Activated naive CD4-positive, alpha-beta T cell treated with anti-CD3 and anti-CD28 coated beads for 36 hours (primary cell): ENCODE measurements at regions of chr22 and their contacts with region 1.

Region 1: GRCh38 chr22:30742291-30743256 is 47.9 kb downstream of the OSBP2 start:
- DNase-seq: peak; percentile 66
- H3K4me3 Mint-ChIP-seq: no peak overlapping the region
- H3K27ac Mint-ChIP-seq: peak overlapping the region; percentile 83
- H3K4me1 Mint-ChIP-seq: peaks cover 60% of the 10 kb centered on the region
- H3K27me3 Mint-ChIP-seq: peaks cover 6% of the 10 kb centered on the region

Region 2: GRCh38 chr22:30159561-30160353 is 582.8 kb before region 1 on chr22:
- CTCF ChIA-PET with region 1: no interaction called
- intact Hi-C with region 1: loop called (anchors 10 kb)
- DNase-seq: no peak
- H3K4me3 Mint-ChIP-seq: no peak overlapping the region
- H3K27ac Mint-ChIP-seq: peak overlapping the region; percentile 93
- H3K4me1 Mint-ChIP-seq: peaks cover 63% of the 10 kb centered on the region
- H3K27me3 Mint-ChIP-seq: no peaks in the 10 kb centered on the region

Region 3: DNA sequence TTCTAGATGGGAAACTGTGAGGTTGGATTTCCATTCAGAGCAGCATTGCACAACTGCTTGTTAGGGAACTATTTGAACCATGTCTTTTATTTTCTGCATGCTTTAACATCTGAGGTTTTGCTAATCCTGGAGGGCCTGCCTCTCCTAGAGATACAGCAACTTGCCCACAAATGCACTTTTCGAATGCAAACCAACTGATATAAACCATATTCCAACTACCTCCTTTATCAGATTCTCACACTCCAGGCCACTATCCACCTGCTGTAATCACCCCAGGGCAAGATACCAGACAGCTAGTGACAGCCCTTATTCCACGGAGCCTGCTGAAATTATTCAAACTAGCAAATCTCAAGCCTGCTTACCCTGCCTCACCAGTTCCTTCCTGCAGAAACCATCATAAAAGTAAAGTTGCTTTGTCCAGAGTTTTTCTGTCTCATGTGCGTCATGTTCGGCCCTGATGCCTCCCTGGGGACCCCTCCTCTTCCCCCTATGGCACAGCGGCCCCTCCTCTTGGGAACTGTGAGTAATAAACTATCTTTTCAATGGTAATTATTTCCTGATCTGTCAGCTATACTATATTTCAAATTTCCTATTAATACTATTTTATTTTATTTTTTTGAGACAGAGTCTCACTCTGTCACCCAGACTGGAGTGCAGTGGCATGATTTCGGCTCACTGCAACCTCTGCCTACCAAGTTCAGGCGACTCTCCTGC is 218.6 kb before region 1 on chr22:
- CTCF ChIA-PET with region 1: no interaction called
- intact Hi-C with region 1: no loop called
- DNase-seq: no peak
- H3K4me3 Mint-ChIP-seq: no peak overlapping the region
- H3K27ac Mint-ChIP-seq: no peak overlapping the region
- H3K4me1 Mint-ChIP-seq: no peaks in the 10 kb centered on the region
- H3K27me3 Mint-ChIP-seq: no peaks in the 10 kb centered on the region

Region 4: DNA sequence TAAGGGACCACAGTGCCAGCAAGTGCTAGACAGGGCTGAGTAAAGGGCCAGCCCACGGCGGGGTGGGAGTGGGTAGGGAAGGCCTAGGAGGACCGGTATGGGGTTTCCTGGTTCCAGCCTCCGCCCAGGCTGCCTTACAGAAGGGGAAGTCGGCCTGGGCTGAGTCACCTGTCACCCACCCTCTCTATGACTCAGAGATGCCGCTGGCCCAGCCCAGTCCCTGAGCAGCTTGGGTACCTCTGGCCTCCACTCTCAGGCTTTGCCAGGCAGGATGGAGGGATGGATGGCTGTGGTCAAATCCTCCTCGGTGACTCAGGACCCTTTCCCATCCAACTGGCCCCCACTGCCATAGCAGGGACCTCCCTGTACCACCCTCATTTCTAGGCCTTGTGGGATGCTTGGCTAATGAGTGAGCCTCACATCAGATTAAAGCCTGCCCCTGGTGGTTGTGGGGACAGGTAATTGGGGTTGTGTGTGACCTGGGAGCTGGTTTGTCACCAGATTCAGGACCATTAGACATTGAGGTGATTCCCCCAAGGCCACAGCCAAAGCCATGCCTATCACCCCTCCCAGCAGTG is 93.1 kb before region 1 on chr22:
- CTCF ChIA-PET with region 1: interaction called, 4 read pairs
- intact Hi-C with region 1: loop called (anchors 1 kb)
- DNase-seq: peak; percentile 95
- H3K4me3 Mint-ChIP-seq: no peak overlapping the region
- H3K27ac Mint-ChIP-seq: peak overlapping the region; percentile 75
- H3K4me1 Mint-ChIP-seq: peaks cover 28% of the 10 kb centered on the region
- H3K27me3 Mint-ChIP-seq: no peaks in the 10 kb centered on the region

Region 5: GRCh38 chr22:30667494-30668385 is 74.8 kb before region 1 on chr22 and contains the start of gene DUSP18:
- CTCF ChIA-PET with region 1: no interaction called
- intact Hi-C with region 1: loop called (anchors 1 kb)
- DNase-seq: peak; percentile 94
- H3K4me3 Mint-ChIP-seq: peak within 1 kb of the TSS; percentile 98
- H3K27ac Mint-ChIP-seq: peak within 1 kb of the TSS; percentile 22
- H3K4me1 Mint-ChIP-seq: peaks cover 17% of the 10 kb centered on the region
- H3K27me3 Mint-ChIP-seq: no peaks in the 10 kb centered on the region
- total RNA-seq, gene DUSP18: 4.7 to 5.6 TPM

Region 6: DNA sequence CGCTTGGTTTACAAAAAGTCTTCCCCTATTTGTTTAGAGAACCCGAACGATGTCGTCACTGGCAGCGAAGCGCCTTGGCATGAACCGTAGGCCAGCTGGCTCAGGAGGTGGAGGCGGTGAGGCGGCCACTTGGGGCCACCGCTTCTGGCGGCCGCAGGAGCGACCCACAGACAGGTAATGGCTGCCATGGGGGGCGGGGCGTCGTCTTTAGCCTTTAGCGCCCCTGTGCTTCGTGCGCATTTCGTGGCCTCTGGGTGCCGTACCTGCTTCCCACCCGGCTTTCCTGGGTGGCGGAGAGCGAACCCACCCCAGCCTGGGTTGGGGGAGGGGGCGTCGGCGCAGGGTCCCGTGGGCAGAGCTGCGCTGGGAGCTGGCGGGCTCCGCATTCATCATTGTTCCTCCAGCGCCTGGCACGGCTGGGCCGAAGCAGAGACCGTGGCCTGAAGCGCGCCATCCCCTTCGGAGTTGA is 48.4 kb before region 1 on chr22:
- CTCF ChIA-PET with region 1: interaction called, 3 read pairs
- intact Hi-C with region 1: loop called (anchors 2 kb)
- DNase-seq: peak; percentile 64
- H3K4me3 Mint-ChIP-seq: peak overlapping the region; percentile 87
- H3K27ac Mint-ChIP-seq: no peak overlapping the region
- H3K4me1 Mint-ChIP-seq: peaks cover 11% of the 10 kb centered on the region
- H3K27me3 Mint-ChIP-seq: peaks cover 12% of the 10 kb centered on the region

Region 7: DNA sequence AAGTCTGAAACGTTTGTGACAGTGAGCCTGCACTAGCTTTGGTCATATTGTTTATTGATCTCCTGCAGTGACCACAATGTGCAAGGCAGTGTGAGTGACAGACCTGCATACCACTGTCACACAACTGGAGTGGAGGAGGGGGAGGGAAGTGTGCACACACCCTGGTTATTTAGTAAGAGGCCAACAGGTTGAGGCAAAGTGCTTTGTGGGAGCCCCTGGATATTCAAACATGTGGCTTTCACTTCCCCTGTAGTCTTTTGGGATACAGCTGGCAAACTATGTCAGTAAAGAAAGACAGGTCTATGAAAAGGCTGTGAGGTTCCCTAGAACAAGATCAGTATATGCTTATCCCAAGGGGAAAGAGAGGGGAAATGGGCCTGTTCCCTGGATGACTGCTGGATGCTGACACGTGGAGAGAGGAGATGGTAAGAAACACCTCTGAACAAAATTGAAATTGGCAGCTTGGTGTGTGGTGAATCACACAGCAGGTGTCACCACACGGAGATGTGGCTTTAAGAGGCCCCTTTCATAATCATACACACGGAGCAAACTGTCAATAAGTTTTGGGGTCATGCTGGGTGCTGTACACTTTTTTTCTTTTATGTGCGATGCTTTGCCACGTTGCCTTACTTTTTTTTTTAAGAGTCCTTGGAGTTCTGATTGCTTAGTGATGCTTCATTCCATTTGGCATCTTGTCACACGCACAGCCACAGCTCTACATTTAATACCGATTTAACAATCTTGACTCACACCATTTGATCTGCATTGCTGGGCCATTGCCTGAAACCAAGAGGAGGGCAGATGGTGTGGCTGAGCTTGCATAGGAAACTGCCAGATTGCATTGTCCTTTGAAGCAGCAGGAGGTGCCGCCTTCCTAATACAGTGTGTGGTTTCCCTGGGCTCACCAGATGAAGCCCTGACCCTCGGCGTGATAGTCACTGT is 36.6 kb before region 1 on chr22:
- CTCF ChIA-PET with region 1: interaction called, 4 read pairs
- intact Hi-C with region 1: loop called (anchors 2 kb)
- DNase-seq: peak; percentile 39
- H3K4me3 Mint-ChIP-seq: no peak overlapping the region
- H3K27ac Mint-ChIP-seq: peak overlapping the region; percentile 9
- H3K4me1 Mint-ChIP-seq: peaks cover 17% of the 10 kb centered on the region
- H3K27me3 Mint-ChIP-seq: no peaks in the 10 kb centered on the region

Region 8: GRCh38 chr22:30754971-30755756 is 12.6 kb after region 1 on chr22:
- CTCF ChIA-PET with region 1: interaction called, 15 read pairs
- intact Hi-C with region 1: no loop called
- DNase-seq: peak; percentile 82
- H3K4me3 Mint-ChIP-seq: no peak overlapping the region
- H3K27ac Mint-ChIP-seq: no peak overlapping the region
- H3K4me1 Mint-ChIP-seq: no peaks in the 10 kb centered on the region
- H3K27me3 Mint-ChIP-seq: peaks cover 3% of the 10 kb centered on the region